Heart right ventricle (tissue), 16 donors: ENCODE measurements at regions of chr18 and their contacts with region 1.

Region 1: DNA sequence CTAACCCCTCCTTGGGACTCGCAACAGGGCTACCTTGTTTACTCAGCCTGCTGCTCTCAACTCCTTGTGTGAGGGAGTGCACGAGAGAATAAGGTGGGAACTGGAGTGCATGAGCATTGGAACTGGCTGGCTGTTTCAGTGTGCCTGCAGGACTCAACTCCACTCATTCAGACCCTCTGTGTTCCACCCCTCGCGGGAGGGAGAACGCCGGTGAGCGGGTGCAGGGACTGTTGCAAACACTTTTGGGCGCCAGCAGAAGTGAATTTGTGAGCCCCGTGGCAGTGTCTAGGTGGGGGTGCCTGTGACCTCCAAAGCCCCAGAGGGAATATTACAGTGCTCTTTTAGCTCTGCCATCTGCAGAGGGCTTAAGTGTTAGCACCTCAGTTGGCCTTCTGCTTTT is 1978.3 kb upstream of the PIK3C3 start:
- DNase-seq: no peak
- ATAC-seq: no peak
- H3K4me3 ChIP-seq: no peak overlapping the region
- H3K27ac ChIP-seq: no peak overlapping the region
- H3K4me1 ChIP-seq: no peaks in the 10 kb centered on the region
- H3K27me3 ChIP-seq: no peaks in the 10 kb centered on the region
- CTCF ChIP-seq: no peak

Region 2: DNA sequence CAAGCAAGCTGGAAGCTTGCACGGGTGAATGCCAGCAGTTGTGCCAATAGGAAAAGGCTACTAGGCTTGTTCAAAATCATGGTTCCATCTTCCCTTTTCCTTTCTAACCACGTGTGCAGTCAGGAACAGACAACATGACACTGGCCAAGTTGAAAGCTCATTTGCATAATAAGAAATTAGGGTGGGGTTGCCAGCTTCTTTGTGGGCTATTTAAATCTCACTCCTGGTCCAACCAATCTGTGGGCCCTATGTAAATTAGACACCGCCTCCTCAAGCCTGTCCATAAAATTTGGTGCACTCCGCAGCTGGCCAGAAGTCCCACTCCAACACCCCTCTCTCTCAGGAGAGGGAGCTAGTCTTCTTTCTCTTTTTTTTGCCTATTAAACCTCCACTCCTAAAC is 29.9 kb after region 1 on chr18:
- intact Hi-C with region 1: loop called in 1 of 10 experiments (anchors 2 kb)
- DNase-seq: no peak
- ATAC-seq: no peak
- H3K4me3 ChIP-seq: no peak overlapping the region
- H3K27ac ChIP-seq: no peak overlapping the region
- H3K4me1 ChIP-seq: no peaks in the 10 kb centered on the region
- H3K27me3 ChIP-seq: no peaks in the 10 kb centered on the region
- CTCF ChIP-seq: no peak